Right cardiac atrium (tissue), 5 donors: ENCODE measurements at regions of chr1 and their contacts with region 1.

Region 1: GRCh38 chr1:4494558-4494957 is 159.9 kb upstream of the AJAP1 start:
- DNase-seq: peak in 1 of 3 donors; percentile 63
- ATAC-seq: peak; percentile 41 to 64
- H3K4me3 ChIP-seq: no peak overlapping the region
- H3K27ac ChIP-seq: no peak overlapping the region
- H3K4me1 ChIP-seq: no peaks in the 10 kb centered on the region
- H3K27me3 ChIP-seq: no peaks in the 10 kb centered on the region

Region 2: GRCh38 chr1:4344065-4344732 is 150.4 kb before region 1 on chr1:
- intact Hi-C with region 1: no loop called
- DNase-seq: no peak
- ATAC-seq: no peak
- H3K4me3 ChIP-seq: no peak overlapping the region
- H3K27ac ChIP-seq: no peak overlapping the region
- H3K4me1 ChIP-seq: no peaks in the 10 kb centered on the region
- H3K27me3 ChIP-seq: no peaks in the 10 kb centered on the region

Region 3: DNA sequence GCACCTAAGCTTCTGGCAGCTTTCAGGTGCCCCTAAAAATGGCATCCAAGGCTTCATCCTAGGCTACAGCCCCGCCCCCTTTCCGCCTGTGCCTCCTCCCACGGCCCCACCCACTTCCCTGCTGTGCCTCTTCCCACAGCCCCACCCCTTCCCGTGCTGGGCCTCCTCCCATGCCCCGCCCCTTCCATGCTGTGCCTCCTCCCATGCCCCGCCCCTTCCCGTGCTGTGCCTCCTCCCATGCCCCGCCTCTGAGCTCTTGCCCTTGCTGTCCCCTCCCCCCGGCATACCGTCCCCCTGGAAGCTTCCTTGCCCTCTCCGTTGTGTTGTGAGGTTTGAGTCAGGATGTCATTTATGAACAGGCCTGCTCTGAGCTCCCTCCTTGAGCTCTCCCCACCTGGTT is 68.7 kb before region 1 on chr1:
- intact Hi-C with region 1: no loop called
- DNase-seq: peak in 1 of 3 donors; percentile 49
- ATAC-seq: no peak
- H3K4me3 ChIP-seq: no peak overlapping the region
- H3K27ac ChIP-seq: no peak overlapping the region
- H3K4me1 ChIP-seq: no peaks in the 10 kb centered on the region
- H3K27me3 ChIP-seq: no peaks in the 10 kb centered on the region

Region 4: GRCh38 chr1:4585216-4585615 is 90.7 kb after region 1 on chr1:
- intact Hi-C with region 1: loop called in 1 of 4 experiments (anchors 10 kb)
- DNase-seq: peak in 1 of 3 donors; percentile 71
- ATAC-seq: peak in 1 of 2 donors; percentile 46
- H3K4me3 ChIP-seq: no peak overlapping the region
- H3K27ac ChIP-seq: no peak overlapping the region
- H3K4me1 ChIP-seq: no peaks in the 10 kb centered on the region
- H3K27me3 ChIP-seq: no peaks in the 10 kb centered on the region

Region 5: DNA sequence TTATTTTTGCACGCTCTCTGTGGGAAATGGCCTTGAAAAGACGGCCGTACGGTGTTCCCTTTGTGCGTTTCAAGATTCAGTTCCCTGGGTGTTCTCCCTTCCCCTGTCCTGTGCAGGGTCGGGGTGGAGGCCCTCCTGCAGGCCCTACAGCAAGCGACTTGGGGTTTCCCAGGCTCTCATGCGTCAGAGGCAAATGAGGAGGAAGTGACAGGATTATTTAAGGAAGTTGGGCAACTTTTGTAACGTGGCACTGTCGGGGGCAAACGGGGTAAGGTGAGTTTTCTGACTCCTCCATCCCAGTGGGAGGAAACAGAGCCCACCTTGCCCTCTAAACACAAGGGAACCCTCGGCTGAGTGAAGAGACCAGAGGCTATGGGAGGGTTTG is 143.8 kb after region 1 on chr1:
- intact Hi-C with region 1: no loop called
- DNase-seq: peak in 1 of 3 donors; percentile 36
- ATAC-seq: no peak
- H3K4me3 ChIP-seq: no peak overlapping the region
- H3K27ac ChIP-seq: no peak overlapping the region
- H3K4me1 ChIP-seq: no peaks in the 10 kb centered on the region
- H3K27me3 ChIP-seq: no peaks in the 10 kb centered on the region